ENCODE measurements at regions of chr4 and their contacts with region 1.

Region 1: DNA sequence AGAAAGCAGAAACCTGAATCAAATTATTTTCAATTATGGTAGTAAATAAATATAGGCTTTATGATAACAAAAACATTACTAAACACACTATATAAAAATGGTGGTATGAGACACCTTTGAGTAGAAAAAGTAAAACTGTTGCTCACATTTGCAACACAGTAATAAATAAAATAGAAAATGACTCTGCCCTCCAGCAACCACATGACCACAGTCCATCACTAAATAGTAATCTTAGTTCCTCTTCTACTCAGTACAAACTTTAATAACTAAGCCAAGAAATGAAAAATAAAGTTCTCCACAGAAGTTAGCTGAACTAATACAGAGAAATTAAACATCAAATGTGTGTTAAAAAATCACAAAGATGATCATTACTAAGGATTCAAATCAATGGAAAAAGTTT is 108.5 kb downstream of the ADGRA3 start:
- DNase-seq: no peak
- H3K4me3 ChIP-seq: no peak overlapping the region
- H3K27ac ChIP-seq: no peak overlapping the region
- H3K4me1 ChIP-seq: no peaks in the 10 kb centered on the region
- H3K27me3 ChIP-seq: no peaks in the 10 kb centered on the region
- CTCF ChIP-seq: no peak
- EP300 ChIP-seq: no peak
- POLR2A ChIP-seq: no peak

Region 2: DNA sequence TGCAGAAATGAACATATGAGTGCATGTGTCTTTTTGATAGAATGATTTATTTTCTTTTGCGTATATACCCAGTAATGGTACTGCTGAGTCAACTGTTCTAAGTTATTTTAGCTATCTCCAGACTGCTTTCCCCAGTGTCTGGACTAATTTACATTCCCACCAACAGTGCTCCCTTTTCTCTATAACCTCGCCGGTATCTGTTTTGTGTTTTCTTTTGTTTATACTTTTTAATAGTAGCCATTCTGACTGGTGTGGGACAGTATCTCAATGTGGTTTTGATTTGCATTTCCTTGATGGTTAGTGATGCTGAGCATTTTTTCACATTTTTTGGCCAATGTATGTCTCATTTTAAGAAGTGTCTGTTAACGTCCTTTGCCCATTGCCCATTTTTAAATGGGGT is 240.2 kb before region 1 on chr4:
- intact Hi-C with region 1: no loop called
- DNase-seq: no peak
- H3K4me3 ChIP-seq: no peak overlapping the region
- H3K27ac ChIP-seq: no peak overlapping the region
- H3K4me1 ChIP-seq: no peaks in the 10 kb centered on the region
- H3K27me3 ChIP-seq: no peaks in the 10 kb centered on the region
- CTCF ChIP-seq: no peak
- EP300 ChIP-seq: no peak
- POLR2A ChIP-seq: no peak

Region 3: GRCh38 chr4:22607382-22607781 is 200.0 kb after region 1 on chr4:
- intact Hi-C with region 1: loop called (anchors 10 kb)
- DNase-seq: peak; percentile 61 to 81
- H3K4me3 ChIP-seq: no peak overlapping the region
- H3K27ac ChIP-seq: no peak overlapping the region
- H3K4me1 ChIP-seq: no peaks in the 10 kb centered on the region
- H3K27me3 ChIP-seq: no peaks in the 10 kb centered on the region
- CTCF ChIP-seq: peak in 5 of 7 experiments; percentile 44 to 67 (median 58)
- EP300 ChIP-seq: no peak
- POLR2A ChIP-seq: no peak

Region 4: DNA sequence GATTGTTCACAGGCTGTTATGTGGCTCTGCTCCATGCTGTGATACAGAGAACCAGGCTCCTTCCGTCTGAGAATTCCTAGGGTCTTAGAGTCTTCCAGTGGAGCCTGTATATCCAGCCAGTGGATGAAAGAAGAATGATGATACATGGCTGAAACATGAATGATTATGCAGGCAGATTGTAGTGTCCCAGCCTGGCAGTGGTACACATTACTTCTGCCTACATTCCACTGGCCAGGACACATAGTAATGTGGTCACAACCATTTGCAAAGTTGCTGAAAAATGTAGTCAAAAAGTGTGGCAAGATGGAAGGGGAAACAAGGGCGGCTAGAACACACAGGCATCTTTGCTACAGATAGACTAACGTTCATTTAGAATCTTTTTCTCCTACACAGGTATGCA is 280.9 kb after region 1 on chr4:
- intact Hi-C with region 1: loop called (anchors 10 kb)
- DNase-seq: no peak
- H3K4me3 ChIP-seq: no peak overlapping the region
- H3K27ac ChIP-seq: no peak overlapping the region
- H3K4me1 ChIP-seq: peaks cover 0 to 5% (median 2%) of the 10 kb centered on the region in 4 donors
- H3K27me3 ChIP-seq: no peaks in the 10 kb centered on the region
- CTCF ChIP-seq: no peak
- EP300 ChIP-seq: no peak
- POLR2A ChIP-seq: no peak

Measured in stomach (tissue), 19 donors.